ENCODE measurements at regions of chr2 and their contacts with region 1.

Region 1: GRCh38 chr2:42859006-42859552 is 66.7 kb upstream of the HAAO start:
- DNase-seq: peak in 1 of 2 donors; percentile 81
- ATAC-seq: peak in 2 of 8 donors; percentile 30 to 38
- H3K4me3 ChIP-seq: no peak overlapping the region
- H3K27ac ChIP-seq: peak overlapping the region in 6 of 10 donors; percentile 3 to 76 (median 44)
- H3K4me1 ChIP-seq: peaks cover 2 to 30% (median 17%) of the 10 kb centered on the region in 9 donors
- H3K27me3 ChIP-seq: no peaks in the 10 kb centered on the region
- CTCF ChIP-seq: peak; percentile 80 to 93 (median 88)

Region 2: DNA sequence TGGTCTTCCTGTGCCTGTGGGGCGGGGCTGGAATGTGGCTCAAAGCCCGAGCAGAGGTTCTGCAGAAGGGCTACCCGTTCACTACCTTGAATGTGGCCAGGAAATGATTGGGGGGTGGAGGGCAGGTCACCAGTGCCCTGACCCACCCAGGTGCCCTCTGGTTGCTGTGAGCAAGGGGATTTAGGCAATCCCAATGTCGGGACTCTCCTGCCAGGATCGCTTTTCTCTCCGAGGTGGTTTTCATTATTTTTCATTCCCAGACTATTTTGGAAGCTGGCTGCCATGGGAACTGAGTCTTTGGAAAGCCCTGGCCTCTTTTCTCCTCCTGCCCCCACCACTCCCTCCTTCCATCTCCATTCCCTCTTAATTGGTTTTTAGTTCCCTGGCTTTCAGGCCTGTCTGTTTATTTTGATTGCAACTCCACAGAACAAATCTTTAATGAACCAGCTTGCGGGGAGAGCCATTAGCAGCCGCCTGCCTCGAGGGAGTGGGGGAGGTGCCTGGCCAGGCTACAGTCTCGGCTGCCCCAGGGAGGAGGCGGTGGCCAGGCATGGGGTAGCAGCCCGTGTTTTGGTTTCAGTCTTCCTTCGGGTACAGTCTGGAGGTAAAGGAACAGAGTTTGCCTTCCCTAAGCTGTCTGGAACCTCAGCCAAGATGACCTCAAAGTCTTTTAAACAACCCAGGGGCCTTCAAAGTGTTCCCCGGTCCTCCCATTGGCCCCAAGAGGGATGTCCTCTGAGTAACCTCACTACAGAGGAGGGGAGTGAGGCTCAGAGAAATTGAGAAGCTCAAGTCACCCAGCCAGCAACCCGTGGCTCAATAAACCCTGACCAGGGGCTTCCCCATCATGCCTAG is 47.7 kb after region 1 on chr2:
- intact Hi-C with region 1: loop called in 2 of 10 experiments (anchors 5 kb)
- DNase-seq: peak; percentile 48 to 73
- ATAC-seq: peak; percentile 45 to 77 (median 63)
- H3K4me3 ChIP-seq: peak overlapping the region in 3 of 10 donors; percentile 3 to 32 (median 24)
- H3K27ac ChIP-seq: peak overlapping the region; percentile 60 to 92 (median 82)
- H3K4me1 ChIP-seq: peaks cover 35 to 74% (median 61%) of the 10 kb centered on the region in 9 donors
- H3K27me3 ChIP-seq: peaks cover 0 to 7% (median 0%) of the 10 kb centered on the region in 7 donors
- CTCF ChIP-seq: no peak

Region 3: GRCh38 chr2:42928692-42929545 is 69.8 kb after region 1 on chr2:
- intact Hi-C with region 1: loop called in 5 of 10 experiments (anchors 5 to 10 kb)
- DNase-seq: no peak
- ATAC-seq: peak in 3 of 8 donors; percentile 10 to 16 (median 13)
- H3K4me3 ChIP-seq: no peak overlapping the region
- H3K27ac ChIP-seq: peak overlapping the region; percentile 65 to 97 (median 90)
- H3K4me1 ChIP-seq: peaks cover 71 to 100% (median 96%) of the 10 kb centered on the region in 9 donors
- H3K27me3 ChIP-seq: no peaks in the 10 kb centered on the region
- CTCF ChIP-seq: peak in 7 of 9 donors; percentile 22 to 59 (median 40)

Region 4: GRCh38 chr2:43484323-43484930 is 625.3 kb after region 1 on chr2:
- intact Hi-C with region 1: loop called in 3 of 10 experiments (anchors 10 kb)
- DNase-seq: peak in 1 of 2 donors; percentile 20
- ATAC-seq: peak in 6 of 8 donors; percentile 60 to 68 (median 64)
- H3K4me3 ChIP-seq: no peak overlapping the region
- H3K27ac ChIP-seq: peak overlapping the region in 5 of 10 donors; percentile 13 to 69 (median 65)
- H3K4me1 ChIP-seq: peaks cover 8 to 48% (median 29%) of the 10 kb centered on the region in 9 donors
- H3K27me3 ChIP-seq: no peaks in the 10 kb centered on the region
- CTCF ChIP-seq: peak; percentile 27 to 83 (median 71)

Measured in heart right ventricle (tissue), 16 donors.